ENCODE measurements at regions of chr16 and their contacts with region 1.

Region 1: GRCh38 chr16:2777231-2777902 is at the start of gene ELOB:
- DNase-seq: peak; percentile 85
- H3K4me3 ChIP-seq: peak within 1 kb of the TSS; percentile 41 to 96 (median 65)
- H3K27ac ChIP-seq: peak within 1 kb of the TSS; percentile 80
- H3K4me1 ChIP-seq: peaks cover 8% of the 10 kb centered on the region
- H3K27me3 ChIP-seq: no peaks in the 10 kb centered on the region
- CTCF ChIP-seq: no peak
- POLR2A ChIP-seq: peak; percentile 82
- total RNA-seq, gene ELOB: 158 and 251 TPM in 2 replicates

Region 2: GRCh38 chr16:2682209-2683021 is 95.0 kb before region 1 on chr16 and contains the start of gene KCTD5:
- CTCF ChIA-PET with region 1: no interaction called
- POLR2A ChIA-PET with region 1: no interaction called
- dilution Hi-C with region 1: no loop called
- intact Hi-C with region 1: loop called (anchors 5 kb)
- DNase-seq: peak; percentile 94
- H3K4me3 ChIP-seq: peak within 1 kb of the TSS; percentile 65 to 91 (median 75)
- H3K27ac ChIP-seq: peak within 1 kb of the TSS; percentile 68
- H3K4me1 ChIP-seq: peaks cover 6% of the 10 kb centered on the region
- H3K27me3 ChIP-seq: no peaks in the 10 kb centered on the region
- CTCF ChIP-seq: no peak
- POLR2A ChIP-seq: peak; percentile 99
- total RNA-seq, gene KCTD5: 30.8 and 32.2 TPM in 2 replicates

Region 3: GRCh38 chr16:2720719-2721633 is 56.4 kb before region 1 on chr16:
- CTCF ChIA-PET with region 1: no interaction called
- POLR2A ChIA-PET with region 1: no interaction called
- dilution Hi-C with region 1: no loop called
- intact Hi-C with region 1: loop called (anchors 1 kb)
- DNase-seq: peak; percentile 64
- H3K4me3 ChIP-seq: peak overlapping the region; percentile 38 to 62 (median 55)
- H3K27ac ChIP-seq: peak overlapping the region; percentile 41
- H3K4me1 ChIP-seq: peaks cover 4% of the 10 kb centered on the region
- H3K27me3 ChIP-seq: peaks cover 0 to 4% of the 10 kb centered on the region in 2 experiments
- CTCF ChIP-seq: peak; percentile 29 to 61
- POLR2A ChIP-seq: peak; percentile 53

Region 4: DNA sequence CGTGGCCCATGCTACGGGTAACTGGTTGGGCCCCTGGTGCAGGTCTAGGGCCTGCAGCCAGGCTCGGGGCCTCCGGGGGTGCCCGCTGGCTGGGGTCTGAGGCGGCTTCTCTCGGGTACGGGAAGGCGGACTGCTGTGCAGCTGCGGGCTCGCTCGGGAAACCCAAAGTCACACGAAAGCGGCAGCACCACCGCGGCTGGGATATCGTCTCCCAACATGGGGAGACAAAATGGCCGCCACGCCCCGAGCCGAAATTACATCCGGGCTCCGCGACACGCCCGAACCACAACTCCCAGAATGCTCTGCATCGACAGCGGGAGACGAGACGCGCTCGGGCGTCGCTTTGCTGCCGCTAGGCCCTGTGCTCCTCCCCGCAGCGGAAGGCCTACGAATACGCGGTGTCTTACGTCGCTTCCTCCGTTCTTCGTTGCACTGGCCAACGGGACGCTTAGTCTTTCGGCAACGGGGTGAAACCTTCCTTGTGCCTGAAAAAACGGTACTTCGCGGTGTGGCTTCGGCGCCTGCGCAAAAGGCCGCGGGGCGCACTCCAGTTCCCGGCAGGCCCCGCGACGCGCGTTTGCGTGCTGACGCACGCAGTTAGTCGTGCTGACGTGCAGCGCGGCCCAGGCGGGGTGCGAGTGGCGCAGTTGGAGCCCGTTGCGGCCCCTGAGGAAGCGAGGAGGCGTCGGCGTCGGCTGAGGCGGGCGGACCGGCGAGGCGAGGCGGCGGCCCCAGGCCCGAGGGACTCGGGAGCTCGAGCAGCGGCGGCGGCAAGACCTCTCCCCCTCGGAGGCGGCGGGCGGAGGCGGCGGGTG is 25.1 kb before region 1 on chr16 and contains the start of gene SRRM2:
- CTCF ChIA-PET with region 1: interaction called, 3 read pairs
- POLR2A ChIA-PET with region 1: no interaction called
- dilution Hi-C with region 1: no loop called
- intact Hi-C with region 1: loop called (anchors 1 kb)
- DNase-seq: peak; percentile 98
- H3K4me3 ChIP-seq: peak within 1 kb of the TSS; percentile 91 to 96 (median 93)
- H3K27ac ChIP-seq: peak within 1 kb of the TSS; percentile 65
- H3K4me1 ChIP-seq: peaks cover 26% of the 10 kb centered on the region
- H3K27me3 ChIP-seq: no peaks in the 10 kb centered on the region
- CTCF ChIP-seq: no peak
- POLR2A ChIP-seq: peak; percentile 81
- total RNA-seq, gene SRRM2: 483 and 492 TPM in 2 replicates

Region 5: DNA sequence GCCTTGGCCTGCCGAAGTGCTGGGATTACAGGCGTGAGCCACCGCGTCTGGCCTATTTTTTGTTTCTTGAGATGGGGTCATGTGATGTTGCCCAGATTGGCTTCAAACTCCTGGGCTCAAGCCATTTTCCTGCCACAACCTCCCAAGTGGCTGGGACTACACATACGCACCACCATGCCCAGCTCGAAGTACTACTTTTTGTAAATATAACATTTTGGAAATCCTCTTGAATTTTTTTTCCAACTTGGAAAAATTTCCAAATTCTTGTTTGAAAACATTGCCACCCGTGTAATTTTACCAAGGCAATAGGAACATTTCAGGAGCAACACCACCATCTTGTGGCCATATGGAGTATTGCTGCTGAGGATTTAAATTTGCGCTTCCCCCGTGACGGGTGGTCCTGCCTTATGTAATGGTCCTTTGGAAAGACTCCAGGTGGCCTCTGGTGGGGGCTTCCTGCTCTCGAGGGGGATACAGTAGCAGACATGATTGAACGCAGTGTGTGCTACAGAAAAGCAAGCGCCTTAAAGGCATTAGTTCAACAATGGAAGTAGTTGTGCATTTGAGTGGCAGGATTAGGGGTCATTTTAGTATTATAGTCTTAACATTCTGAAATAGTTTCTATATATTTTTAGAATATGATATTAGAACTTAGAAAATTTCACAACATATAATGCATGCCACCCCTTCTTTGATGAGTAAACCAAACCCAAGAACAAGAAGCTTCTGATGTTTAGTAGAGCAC is 142.3 kb after region 1 on chr16:
- CTCF ChIA-PET with region 1: no interaction called
- POLR2A ChIA-PET with region 1: no interaction called
- dilution Hi-C with region 1: no loop called
- intact Hi-C with region 1: loop called (anchors 5 kb)
- DNase-seq: peak; percentile 74
- H3K4me3 ChIP-seq: no peak overlapping the region
- H3K27ac ChIP-seq: no peak overlapping the region
- H3K4me1 ChIP-seq: peaks cover 16% of the 10 kb centered on the region
- H3K27me3 ChIP-seq: no peaks in the 10 kb centered on the region
- CTCF ChIP-seq: peak; percentile 64 to 80
- POLR2A ChIP-seq: no peak

Measured in endothelial cell of umbilical vein (primary cell).